ENCODE measurements at regions of chr5 and their contacts with region 1.

Region 1: GRCh38 chr5:14996997-14997396 is 125.4 kb upstream of the ANKH start:
- DNase-seq: no peak
- ATAC-seq: peak; percentile 29
- H3K4me3 ChIP-seq: no peak overlapping the region
- H3K4me3 Mint-ChIP-seq: no peak overlapping the region
- H3K27ac ChIP-seq: no peak overlapping the region
- H3K27ac Mint-ChIP-seq: no peak overlapping the region
- H3K4me1 ChIP-seq: peaks cover 5% of the 10 kb centered on the region in 2 donors
- H3K4me1 Mint-ChIP-seq: peaks cover 6 to 33% (median 12%) of the 10 kb centered on the region in 7 donors
- H3K27me3 ChIP-seq: no peaks in the 10 kb centered on the region
- H3K27me3 Mint-ChIP-seq: peaks cover 0 to 18% (median 0%) of the 10 kb centered on the region in 5 donors

Region 2: DNA sequence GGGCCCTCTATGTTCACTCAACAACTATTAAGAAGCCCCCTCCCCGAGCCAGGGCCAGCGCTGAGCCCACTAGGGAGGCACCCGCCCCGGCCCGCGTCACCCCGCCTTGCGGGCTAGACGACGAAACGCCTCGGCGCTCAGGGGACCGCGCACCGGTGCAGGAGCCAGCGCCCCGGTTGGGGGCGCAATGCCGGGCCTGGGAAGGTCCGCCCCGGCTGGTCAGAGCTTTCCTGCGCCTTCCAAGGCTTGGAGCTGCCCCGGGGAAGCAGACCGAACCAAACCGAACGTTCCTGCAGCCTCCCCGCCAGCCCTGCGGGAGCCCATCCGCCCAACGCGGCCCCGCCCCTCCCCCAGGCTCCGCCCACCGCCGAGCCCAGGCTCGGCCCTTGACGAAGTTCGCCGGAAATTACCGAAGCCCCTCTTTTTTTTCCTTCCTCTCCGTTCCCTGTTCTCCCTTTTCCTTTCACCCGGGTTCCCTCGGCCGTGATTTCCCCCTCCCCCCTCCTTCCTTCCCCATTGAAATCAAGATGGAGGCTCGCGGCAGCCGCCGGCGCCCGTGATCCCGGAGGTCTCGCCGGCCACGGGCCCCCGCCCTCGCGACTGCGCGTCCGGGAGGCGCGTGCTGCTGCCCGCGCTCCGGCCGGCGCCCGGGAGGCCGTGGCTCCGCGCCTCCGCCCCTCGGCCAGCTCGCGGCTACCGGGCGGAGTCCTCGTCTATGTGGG is 854.0 kb before region 1 on chr5 and contains the start of gene TRIO:
- CTCF ChIA-PET with region 1: no interaction called
- POLR2A ChIA-PET with region 1: no interaction called
- intact Hi-C with region 1: loop called in 1 of 2 experiments (anchors 10 kb)
- DNase-seq: peak; percentile 59 to 87 (median 70)
- ATAC-seq: peak; percentile 76
- H3K4me3 ChIP-seq: peak within 1 kb of the TSS; percentile 65
- H3K4me3 Mint-ChIP-seq: peak within 1 kb of the TSS; percentile 78 to 91 (median 86)
- H3K27ac ChIP-seq: peak within 1 kb of the TSS; percentile 46
- H3K27ac Mint-ChIP-seq: peak within 1 kb of the TSS in 5 of 9 donors; percentile 20 to 80 (median 38)
- H3K4me1 ChIP-seq: peaks cover 6% of the 10 kb centered on the region in 2 donors
- H3K4me1 Mint-ChIP-seq: peaks cover 5 to 18% (median 14%) of the 10 kb centered on the region in 7 donors
- H3K27me3 ChIP-seq: peaks cover 3% of the 10 kb centered on the region in 2 donors
- H3K27me3 Mint-ChIP-seq: peaks cover 15 to 63% (median 35%) of the 10 kb centered on the region in 5 donors
- total RNA-seq, gene TRIO: 5.5 to 45.9 (median 8.5) TPM

Region 3: GRCh38 chr5:14174230-14174637 is 822.8 kb before region 1 on chr5:
- CTCF ChIA-PET with region 1: no interaction called
- POLR2A ChIA-PET with region 1: no interaction called
- intact Hi-C with region 1: no loop called
- DNase-seq: no peak
- ATAC-seq: peak; percentile 54
- H3K4me3 ChIP-seq: no peak overlapping the region
- H3K4me3 Mint-ChIP-seq: peak overlapping the region in 2 of 10 donors; percentile 10 to 12
- H3K27ac ChIP-seq: no peak overlapping the region
- H3K27ac Mint-ChIP-seq: no peak overlapping the region
- H3K4me1 ChIP-seq: no peaks in the 10 kb centered on the region
- H3K4me1 Mint-ChIP-seq: peaks cover 0 to 13% (median under 1%) of the 10 kb centered on the region in 7 donors
- H3K27me3 ChIP-seq: no peaks in the 10 kb centered on the region
- H3K27me3 Mint-ChIP-seq: peaks cover 10 to 31% (median 26%) of the 10 kb centered on the region in 5 donors

Region 4: DNA sequence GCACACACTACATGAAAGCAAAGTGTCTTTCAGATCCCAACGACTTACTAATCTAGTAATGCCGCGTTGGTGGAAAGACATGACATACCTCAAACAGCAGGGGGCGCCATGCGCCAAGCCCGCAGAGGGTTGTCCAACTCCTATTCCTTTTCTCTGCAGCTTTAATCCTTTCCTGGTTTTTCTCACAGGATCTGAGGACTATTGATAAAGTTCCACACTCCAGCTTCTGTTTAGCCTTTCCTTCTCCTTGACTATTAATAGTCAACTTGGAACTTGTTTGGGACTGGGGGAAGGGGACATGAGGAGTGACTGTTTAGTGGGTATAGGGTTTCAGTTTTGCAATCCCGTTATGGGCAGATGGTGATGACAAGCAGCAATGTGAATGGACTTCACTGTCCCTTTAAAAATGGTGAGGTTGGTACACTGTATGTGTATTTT is 269.6 kb before region 1 on chr5:
- CTCF ChIA-PET with region 1: interaction called, 12 read pairs
- POLR2A ChIA-PET with region 1: interaction called, 3 read pairs
- intact Hi-C with region 1: no loop called
- DNase-seq: peak; percentile 47 to 79 (median 69)
- ATAC-seq: peak; percentile 77
- H3K4me3 ChIP-seq: no peak overlapping the region
- H3K4me3 Mint-ChIP-seq: no peak overlapping the region
- H3K27ac ChIP-seq: no peak overlapping the region
- H3K27ac Mint-ChIP-seq: peak overlapping the region in 5 of 9 donors; percentile 5 to 49 (median 42)
- H3K4me1 ChIP-seq: peaks cover 0 to 4% of the 10 kb centered on the region in 2 donors
- H3K4me1 Mint-ChIP-seq: peaks cover 8 to 22% (median 16%) of the 10 kb centered on the region in 7 donors
- H3K27me3 ChIP-seq: no peaks in the 10 kb centered on the region
- H3K27me3 Mint-ChIP-seq: no peaks in the 10 kb centered on the region

Region 5: GRCh38 chr5:14946815-14947640 is 50.0 kb before region 1 on chr5:
- CTCF ChIA-PET with region 1: interaction called, 9 read pairs
- POLR2A ChIA-PET with region 1: no interaction called
- intact Hi-C with region 1: loop called in 1 of 2 experiments (anchors 2 kb)
- DNase-seq: peak in 7 of 9 donors; percentile 34 to 66 (median 56)
- ATAC-seq: peak; percentile 92
- H3K4me3 ChIP-seq: no peak overlapping the region
- H3K4me3 Mint-ChIP-seq: no peak overlapping the region
- H3K27ac ChIP-seq: no peak overlapping the region
- H3K27ac Mint-ChIP-seq: no peak overlapping the region
- H3K4me1 ChIP-seq: no peaks in the 10 kb centered on the region
- H3K4me1 Mint-ChIP-seq: peaks cover 0 to 9% (median 5%) of the 10 kb centered on the region in 7 donors
- H3K27me3 ChIP-seq: no peaks in the 10 kb centered on the region
- H3K27me3 Mint-ChIP-seq: peaks cover 0 to 5% (median 4%) of the 10 kb centered on the region in 5 donors

Region 6: GRCh38 chr5:14983666-14984441 is 13.1 kb before region 1 on chr5:
- CTCF ChIA-PET with region 1: interaction called, 8 read pairs
- POLR2A ChIA-PET with region 1: interaction called, 4 read pairs
- intact Hi-C with region 1: loop called in 1 of 2 experiments (anchors 1 kb)
- DNase-seq: peak in 7 of 9 donors; percentile 9 to 38 (median 25)
- ATAC-seq: peak; percentile 90
- H3K4me3 ChIP-seq: no peak overlapping the region
- H3K4me3 Mint-ChIP-seq: peak overlapping the region in 8 of 10 donors; percentile 11 to 63 (median 53)
- H3K27ac ChIP-seq: no peak overlapping the region
- H3K27ac Mint-ChIP-seq: peak overlapping the region in 3 of 9 donors; percentile 16 to 51 (median 41)
- H3K4me1 ChIP-seq: peaks cover 0 to 21% of the 10 kb centered on the region in 2 donors
- H3K4me1 Mint-ChIP-seq: peaks cover 15 to 27% (median 24%) of the 10 kb centered on the region in 7 donors
- H3K27me3 ChIP-seq: no peaks in the 10 kb centered on the region
- H3K27me3 Mint-ChIP-seq: peaks cover 0 to 4% (median 0%) of the 10 kb centered on the region in 5 donors